ENCODE measurements at regions of chr2 and their contacts with region 1.

Region 1: GRCh38 chr2:55718165-55719008 is 24.7 kb upstream of the PNPT1 start:
- DNase-seq: no peak
- H3K4me3 Mint-ChIP-seq: no peak overlapping the region
- H3K27ac Mint-ChIP-seq: no peak overlapping the region
- H3K4me1 Mint-ChIP-seq: no peaks in the 10 kb centered on the region
- H3K27me3 Mint-ChIP-seq: peaks cover 3% of the 10 kb centered on the region

Region 2: GRCh38 chr2:55961318-55961911 is 243.0 kb after region 1 on chr2:
- intact Hi-C with region 1: loop called (anchors 1 kb)
- DNase-seq: no peak
- H3K4me3 Mint-ChIP-seq: no peak overlapping the region
- H3K27ac Mint-ChIP-seq: no peak overlapping the region
- H3K4me1 Mint-ChIP-seq: no peaks in the 10 kb centered on the region
- H3K27me3 Mint-ChIP-seq: no peaks in the 10 kb centered on the region

Region 3: DNA sequence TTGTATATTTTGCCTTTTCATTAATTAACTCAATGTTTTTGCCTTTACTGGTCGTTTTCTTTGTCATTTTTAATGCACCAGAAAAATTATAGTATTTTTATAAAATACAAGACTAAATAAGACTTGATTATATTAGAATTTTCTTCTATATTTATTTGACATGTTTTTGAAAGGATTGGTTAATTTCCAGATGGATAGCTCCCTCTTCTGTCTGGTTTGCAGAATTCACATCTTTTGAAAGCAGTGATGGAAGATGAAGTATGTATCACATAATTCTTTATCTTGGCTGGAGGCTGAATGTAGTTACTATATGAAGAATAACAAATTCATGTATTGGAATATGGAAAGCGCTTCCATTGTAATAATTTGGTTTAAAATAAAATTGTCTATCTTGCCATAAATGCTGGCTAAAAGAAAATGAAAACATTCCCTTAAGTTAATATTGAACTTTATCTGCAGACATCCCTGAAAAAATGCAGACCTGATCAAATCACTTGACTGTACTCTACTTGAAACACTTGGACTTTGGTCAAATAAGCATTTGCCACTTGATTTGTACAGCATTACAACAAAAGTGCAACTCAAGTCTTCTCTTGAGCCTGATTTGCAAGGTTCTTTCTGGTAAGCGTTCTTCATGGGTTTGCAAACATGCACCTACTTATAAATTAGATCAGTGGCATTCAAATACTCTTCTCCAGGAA is 291.5 kb after region 1 on chr2:
- intact Hi-C with region 1: loop called (anchors 5 kb)
- DNase-seq: no peak
- H3K4me3 Mint-ChIP-seq: no peak overlapping the region
- H3K27ac Mint-ChIP-seq: no peak overlapping the region
- H3K4me1 Mint-ChIP-seq: no peaks in the 10 kb centered on the region
- H3K27me3 Mint-ChIP-seq: no peaks in the 10 kb centered on the region

Region 4: GRCh38 chr2:56132138-56132537 is 413.8 kb after region 1 on chr2:
- intact Hi-C with region 1: loop called (anchors 2 kb)
- DNase-seq: no peak
- H3K4me3 Mint-ChIP-seq: no peak overlapping the region
- H3K27ac Mint-ChIP-seq: no peak overlapping the region
- H3K4me1 Mint-ChIP-seq: no peaks in the 10 kb centered on the region
- H3K27me3 Mint-ChIP-seq: no peaks in the 10 kb centered on the region

Measured in activated T-helper 2 cell treated with anti-CD3 and anti-CD28 coated beads, Interferon-gamma antibody, Interleukin-2, Interleukin-4, amounts not matched to agents 10 μg/mL and 5 μg/mL and 100 μg/mL, durations not matched to agents 14 hours and 24 hours and 36 hours (primary cell).